ENCODE measurements at regions of chr7 and their contacts with region 1.

Region 1: GRCh38 chr7:26376175-26376917 is 84.7 kb downstream of the SNX10 start:
- DNase-seq: peak; percentile 81

Region 2: DNA sequence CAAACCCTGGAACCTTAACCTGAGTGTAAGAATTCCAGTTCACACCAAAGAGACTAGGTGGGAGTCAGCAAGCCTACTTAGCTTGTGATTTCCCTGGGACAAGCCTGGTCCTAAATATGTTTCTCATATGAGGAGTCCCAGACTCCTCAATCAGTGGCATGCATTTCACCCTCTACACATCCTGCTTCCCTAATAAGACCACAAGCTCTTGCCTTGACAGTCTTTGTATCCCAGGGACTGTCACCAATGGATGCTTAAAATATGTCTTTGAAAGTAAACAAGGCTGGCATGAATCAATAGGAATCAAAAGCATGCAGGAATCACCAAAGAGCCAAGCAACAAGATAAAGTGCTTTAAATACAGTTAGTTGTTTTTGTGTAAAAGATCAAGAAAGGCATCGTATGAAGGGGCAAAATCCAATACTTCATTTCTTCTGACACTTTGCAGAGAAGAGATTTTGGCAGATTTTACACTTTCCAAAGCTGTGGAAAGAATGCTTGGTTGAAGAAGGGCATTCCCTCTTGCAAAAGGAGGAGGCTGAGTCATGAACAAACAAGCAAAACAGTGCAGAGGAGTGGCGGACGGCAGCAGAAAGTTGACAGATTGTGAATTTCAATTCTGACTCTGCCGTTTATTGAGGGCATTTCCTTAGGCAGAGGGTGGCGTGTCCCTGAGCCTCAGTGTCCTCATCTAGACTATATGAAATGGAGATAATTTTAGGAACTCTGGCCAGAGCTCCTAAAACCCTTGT is 232.9 kb before region 1 on chr7:
- in situ Hi-C with region 1: no loop called
- DNase-seq: peak; percentile 35

Region 3: GRCh38 chr7:26675143-26675887 is 299.0 kb after region 1 on chr7:
- in situ Hi-C with region 1: loop called (anchors 10 kb)
- DNase-seq: no peak

Measured in Caki2 (cell line).